WTC11 (cell line): ENCODE measurements at regions of chr3 and their contacts with region 1.

Region 1: DNA sequence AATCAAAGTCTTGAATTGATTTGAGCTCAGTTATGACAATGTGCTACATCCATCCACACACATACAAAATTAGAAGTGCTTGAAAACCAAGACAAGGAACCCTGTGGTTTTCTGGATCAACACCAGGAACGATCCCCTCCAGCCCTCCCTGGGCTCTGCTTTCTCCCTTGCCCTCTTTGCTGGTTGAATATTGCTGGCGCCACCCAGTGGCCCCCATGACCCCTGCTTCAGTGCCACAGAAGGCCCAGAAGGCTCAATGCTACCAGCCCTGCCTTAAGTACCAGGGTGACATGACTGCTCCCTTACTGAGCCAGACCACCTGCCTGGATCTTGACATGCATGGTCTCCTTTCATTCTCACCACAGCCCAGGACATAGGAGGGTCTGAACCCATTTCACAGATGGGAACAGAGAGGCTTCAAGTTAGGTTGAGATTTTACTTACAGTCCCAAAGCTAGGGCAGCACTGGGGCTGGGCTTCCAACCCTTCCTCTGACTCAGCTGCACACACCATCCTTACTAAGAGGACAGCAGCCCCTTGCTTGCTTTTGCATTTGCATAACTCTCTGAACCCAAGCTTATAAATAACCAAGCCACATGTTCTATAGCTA is 15.0 kb downstream of the IL12A start:
- DNase-seq: peak; percentile 78
- ATAC-seq: peak; percentile 97
- H3K4me3 Mint-ChIP-seq: no peak overlapping the region
- H3K27ac Mint-ChIP-seq: no peak overlapping the region
- H3K4me1 Mint-ChIP-seq: peaks cover 17% of the 10 kb centered on the region
- H3K27me3 Mint-ChIP-seq: no peaks in the 10 kb centered on the region
- CTCF ChIP-seq: peak; percentile 35; the same call in 1 of the 2 replicates

Region 2: GRCh38 chr3:160016972-160017371 is 13.3 kb after region 1 on chr3:
- CTCF ChIA-PET with region 1: interaction called, 13 read pairs
- POLR2A ChIA-PET with region 1: no interaction called
- DNase-seq: no peak
- ATAC-seq: no peak
- H3K4me3 Mint-ChIP-seq: no peak overlapping the region
- H3K27ac Mint-ChIP-seq: no peak overlapping the region
- H3K4me1 Mint-ChIP-seq: peaks cover 5% of the 10 kb centered on the region
- H3K27me3 Mint-ChIP-seq: peaks cover 5% of the 10 kb centered on the region; the same call in 1 of the 2 replicates
- CTCF ChIP-seq: no peak